ENCODE measurements at regions of chr19 and their contacts with region 1.

Region 1: GRCh38 chr19:7386308-7386707 is 37.6 kb downstream of the ARHGEF18 start:
- DNase-seq: no peak
- ATAC-seq: peak; percentile 65
- H3K4me3 ChIP-seq: no peak overlapping the region
- H3K27ac ChIP-seq: peak overlapping the region; percentile 78
- H3K4me1 ChIP-seq: peaks cover 18% of the 10 kb centered on the region
- H3K27me3 ChIP-seq: no peaks in the 10 kb centered on the region
- CTCF ChIP-seq: peak in 2 of 3 experiments; percentile 14 to 54; a peak in 2 of 6 replicates
- EP300 ChIP-seq: no peak
- POLR2A ChIP-seq: no peak
- RAD21 ChIP-seq: peak; percentile 46

Region 2: DNA sequence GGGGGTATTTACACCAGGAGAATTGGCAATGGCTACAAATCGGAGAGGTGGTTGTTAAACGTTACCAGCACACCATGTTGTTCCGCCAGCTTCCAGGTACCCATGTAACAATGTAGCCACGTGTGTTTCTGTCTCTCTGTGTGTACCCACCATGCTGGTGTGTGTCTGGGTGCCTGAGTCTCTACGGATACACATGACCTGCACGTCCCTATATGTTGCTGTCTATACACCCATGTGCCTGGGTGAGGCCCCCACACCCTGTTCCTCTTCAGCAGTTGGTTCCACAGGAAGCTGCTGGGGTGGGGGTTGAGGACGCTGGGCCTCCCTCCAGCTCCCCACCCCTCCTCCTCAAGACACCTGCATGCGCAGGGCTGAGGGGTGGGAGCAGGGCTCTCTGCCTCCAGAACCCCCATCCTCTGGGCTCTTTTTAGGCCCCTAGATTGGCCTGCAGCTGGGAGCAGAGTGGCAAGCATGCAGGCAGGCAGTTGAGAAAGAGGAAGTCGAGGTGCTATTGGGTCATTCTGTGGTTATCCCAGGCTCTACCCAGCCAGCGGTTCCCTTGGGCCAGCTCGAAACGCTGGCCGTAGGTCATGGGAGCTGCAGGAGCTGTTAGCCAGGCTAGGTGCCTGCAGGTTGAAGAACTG is 37.6 kb before region 1 on chr19 and contains the start of gene ARHGEF18:
- CTCF ChIA-PET with region 1: interaction called, 60 read pairs
- POLR2A ChIA-PET with region 1: interaction called, 7 read pairs
- RAD21 ChIA-PET with region 1: interaction called, 20 read pairs
- SMC1A ChIA-PET with region 1: interaction called, 12 read pairs
- in situ Hi-C with region 1: no loop called
- intact Hi-C with region 1: loop called (anchors 5 kb)
- DNase-seq: peak; percentile 59
- ATAC-seq: peak; percentile 60
- H3K4me3 ChIP-seq: peak within 1 kb of the TSS; percentile 43; the same call in 1 of the 2 replicates
- H3K27ac ChIP-seq: peak within 1 kb of the TSS; percentile 77
- H3K4me1 ChIP-seq: peaks cover 58% of the 10 kb centered on the region
- H3K27me3 ChIP-seq: no peaks in the 10 kb centered on the region
- CTCF ChIP-seq: no peak
- EP300 ChIP-seq: peak in 1 of 2 experiments; percentile 36; a peak in 1 of 4 replicates
- POLR2A ChIP-seq: peak; percentile 72; the same call in 1 of the 2 replicates
- RAD21 ChIP-seq: no peak
- polyA plus RNA-seq, gene ARHGEF18: 0.31 to 0.57 TPM

Region 3: GRCh38 chr19:7355151-7355820 is 31.0 kb before region 1 on chr19:
- CTCF ChIA-PET with region 1: interaction called, 60 read pairs
- POLR2A ChIA-PET with region 1: interaction called, 6 read pairs
- RAD21 ChIA-PET with region 1: interaction called, 20 read pairs
- SMC1A ChIA-PET with region 1: interaction called, 3 read pairs
- in situ Hi-C with region 1: no loop called
- intact Hi-C with region 1: loop called (anchors 2 kb)
- DNase-seq: no peak
- ATAC-seq: peak; percentile 10; the same call in 2 of the 3 replicates
- H3K4me3 ChIP-seq: no peak overlapping the region
- H3K27ac ChIP-seq: no peak overlapping the region
- H3K4me1 ChIP-seq: peaks cover 11% of the 10 kb centered on the region
- H3K27me3 ChIP-seq: no peaks in the 10 kb centered on the region
- CTCF ChIP-seq: no peak
- EP300 ChIP-seq: no peak
- POLR2A ChIP-seq: no peak
- RAD21 ChIP-seq: no peak

Region 4: DNA sequence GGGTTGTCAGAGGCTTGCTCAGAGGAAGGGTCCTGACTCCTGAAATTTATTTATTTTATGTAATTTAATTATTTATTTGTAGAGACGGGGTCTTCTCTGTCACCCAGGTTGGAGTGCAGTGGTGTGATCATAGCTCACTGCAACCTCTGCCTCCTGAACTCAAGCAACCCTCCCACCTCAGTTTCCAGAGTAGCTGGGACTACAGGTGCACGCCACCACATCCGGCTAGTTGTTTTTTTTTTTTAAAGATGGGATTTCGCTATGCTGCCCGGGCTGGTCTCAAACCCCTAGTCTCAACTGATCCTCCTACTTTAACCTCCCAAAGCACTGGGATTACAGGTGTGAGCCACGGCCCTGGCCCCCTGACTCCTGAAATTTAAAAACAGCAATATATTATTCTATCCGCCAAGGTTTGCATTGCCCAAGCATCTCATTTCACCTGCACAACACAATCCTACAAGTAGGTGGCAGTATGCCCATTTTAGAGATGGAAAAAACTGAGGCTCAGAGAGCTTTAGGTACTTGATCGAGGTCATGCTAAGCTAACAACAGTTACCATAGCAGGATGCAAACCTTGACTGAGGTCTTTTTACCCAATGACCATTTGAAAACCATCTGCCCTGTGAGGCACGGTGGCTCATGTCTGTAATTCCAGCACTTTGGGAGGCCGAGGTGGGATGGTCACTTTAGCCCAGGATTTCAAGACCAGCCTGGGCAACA is 19.4 kb before region 1 on chr19:
- CTCF ChIA-PET with region 1: interaction called, 63 read pairs
- POLR2A ChIA-PET with region 1: no interaction called
- RAD21 ChIA-PET with region 1: interaction called, 4 read pairs
- SMC1A ChIA-PET with region 1: interaction called, 14 read pairs
- in situ Hi-C with region 1: no loop called
- intact Hi-C with region 1: no loop called
- DNase-seq: no peak
- ATAC-seq: peak; percentile 90
- H3K4me3 ChIP-seq: no peak overlapping the region
- H3K27ac ChIP-seq: no peak overlapping the region
- H3K4me1 ChIP-seq: no peaks in the 10 kb centered on the region
- H3K27me3 ChIP-seq: no peaks in the 10 kb centered on the region
- CTCF ChIP-seq: peak; percentile 65 to 69 (median 66)
- EP300 ChIP-seq: no peak
- POLR2A ChIP-seq: no peak
- RAD21 ChIP-seq: peak; percentile 72

Region 5: DNA sequence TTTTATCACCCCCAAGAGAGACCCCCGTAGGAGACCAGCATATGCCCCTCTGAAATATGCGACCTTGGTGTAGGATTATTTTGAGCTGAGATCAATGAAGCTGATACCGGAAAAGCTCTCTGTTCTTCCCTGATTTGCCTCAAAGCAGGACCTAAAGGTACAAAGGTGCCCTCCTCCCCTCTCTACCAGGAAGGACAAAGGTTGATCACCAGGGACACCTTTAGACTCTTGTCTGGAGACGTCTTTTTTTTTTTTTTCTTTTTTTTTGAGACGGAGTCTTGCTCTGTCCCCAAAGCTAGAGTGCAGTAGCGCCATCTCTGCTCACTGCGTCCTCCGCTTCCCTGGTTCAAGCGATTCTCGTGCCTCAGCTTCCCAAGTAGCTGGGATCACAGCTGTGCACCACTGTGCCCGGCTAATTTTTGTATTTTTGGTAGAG is 103.3 kb after region 1 on chr19:
- CTCF ChIA-PET with region 1: no interaction called
- POLR2A ChIA-PET with region 1: interaction called, 10 read pairs
- RAD21 ChIA-PET with region 1: no interaction called
- SMC1A ChIA-PET with region 1: no interaction called
- in situ Hi-C with region 1: no loop called
- intact Hi-C with region 1: no loop called
- DNase-seq: no peak
- ATAC-seq: no peak
- H3K4me3 ChIP-seq: no peak overlapping the region
- H3K27ac ChIP-seq: no peak overlapping the region
- H3K4me1 ChIP-seq: no peaks in the 10 kb centered on the region; the same call in 1 of the 2 replicates
- H3K27me3 ChIP-seq: no peaks in the 10 kb centered on the region
- CTCF ChIP-seq: no peak
- EP300 ChIP-seq: no peak
- POLR2A ChIP-seq: no peak
- RAD21 ChIP-seq: no peak

Region 6: GRCh38 chr19:7674010-7675005 is 288.0 kb after region 1 on chr19:
- CTCF ChIA-PET with region 1: no interaction called
- POLR2A ChIA-PET with region 1: no interaction called
- RAD21 ChIA-PET with region 1: no interaction called
- SMC1A ChIA-PET with region 1: no interaction called
- in situ Hi-C with region 1: no loop called
- intact Hi-C with region 1: loop called (anchors 10 kb)
- DNase-seq: no peak
- ATAC-seq: peak; percentile 55
- H3K4me3 ChIP-seq: no peak overlapping the region
- H3K27ac ChIP-seq: no peak overlapping the region
- H3K4me1 ChIP-seq: peaks cover 23% of the 10 kb centered on the region
- H3K27me3 ChIP-seq: peaks cover 4 to 7% of the 10 kb centered on the region in 2 experiments; a peak in 3 of 4 replicates
- CTCF ChIP-seq: no peak
- EP300 ChIP-seq: no peak
- POLR2A ChIP-seq: no peak
- RAD21 ChIP-seq: no peak

Region 7: GRCh38 chr19:7680606-7681339 is 294.5 kb after region 1 on chr19 and contains the start of gene TRAPPC5:
- CTCF ChIA-PET with region 1: interaction called, 10 read pairs
- POLR2A ChIA-PET with region 1: interaction called, 3 read pairs
- RAD21 ChIA-PET with region 1: interaction called, 10 read pairs
- SMC1A ChIA-PET with region 1: no interaction called
- in situ Hi-C with region 1: no loop called
- intact Hi-C with region 1: loop called (anchors 10 kb)
- DNase-seq: no peak
- ATAC-seq: peak; percentile 79
- H3K4me3 ChIP-seq: peak within 1 kb of the TSS; percentile 85
- H3K27ac ChIP-seq: peak within 1 kb of the TSS; percentile 97
- H3K4me1 ChIP-seq: peaks cover 39% of the 10 kb centered on the region
- H3K27me3 ChIP-seq: no peaks in the 10 kb centered on the region
- CTCF ChIP-seq: peak; percentile 64 to 97 (median 94); a peak in 4 of 6 replicates
- EP300 ChIP-seq: no peak
- POLR2A ChIP-seq: 0 out of 2 replicates have a peak, but pooled peaks have one; percentile 65
- RAD21 ChIP-seq: peak; percentile 75
- polyA plus RNA-seq, gene TRAPPC5: 4.2 to 22.5 TPM

Measured in GM12878 (cell line).